ENCODE measurements at regions of chr17 and their contacts with region 1.

Region 1: DNA sequence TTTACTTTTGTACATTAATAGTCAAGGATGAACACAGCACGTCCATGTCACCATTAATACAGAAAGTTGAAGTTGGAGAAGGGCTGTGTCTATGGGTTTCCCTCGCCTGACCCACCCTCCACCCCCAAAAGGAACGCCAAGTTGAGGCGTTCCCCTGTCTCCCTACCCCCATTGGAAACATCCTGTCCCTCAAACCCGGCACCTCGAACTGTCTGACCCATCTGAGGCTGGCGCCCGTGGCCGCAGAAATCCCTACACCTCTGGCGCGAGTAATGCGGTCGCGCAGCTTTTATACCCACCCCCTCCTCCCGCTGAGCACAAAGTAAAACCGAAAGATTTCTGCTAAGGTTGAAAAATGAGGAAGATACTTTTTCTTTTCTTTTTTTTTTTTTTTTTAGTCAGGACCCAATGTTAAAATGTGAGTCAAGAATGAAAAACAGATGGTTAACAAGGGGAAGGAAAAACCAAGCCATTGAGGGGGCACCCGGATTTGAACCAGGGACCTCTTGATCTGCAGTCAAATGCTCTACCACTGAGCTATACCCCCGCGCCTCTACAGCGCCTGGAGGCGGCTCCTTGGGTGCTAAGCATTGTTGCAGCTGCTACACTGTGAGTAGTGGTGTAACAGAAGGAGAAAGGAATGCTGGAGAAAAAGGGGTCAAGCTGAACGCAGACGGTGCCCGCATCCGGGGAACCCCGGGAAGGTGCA is 887 bp upstream of the LASP1 start:
- DNase-seq: peak; percentile 92 to 95
- H3K4me3 ChIP-seq: peak overlapping the region; percentile 79
- H3K4me3 Mint-ChIP-seq: peak overlapping the region; percentile 86
- H3K27ac Mint-ChIP-seq: peak overlapping the region; percentile 92
- H3K4me1 ChIP-seq: peaks cover 28% of the 10 kb centered on the region
- H3K4me1 Mint-ChIP-seq: peaks cover 11% of the 10 kb centered on the region
- H3K27me3 ChIP-seq: no peaks in the 10 kb centered on the region
- H3K27me3 Mint-ChIP-seq: no peaks in the 10 kb centered on the region
- CTCF ChIP-seq: peak in 1 of 2 experiments; percentile 20

Region 2: GRCh38 chr17:38711792-38712571 is 157.0 kb before region 1 on chr17:
- CTCF ChIA-PET with region 1: no interaction called
- POLR2A ChIA-PET with region 1: no interaction called
- intact Hi-C with region 1: no loop called
- DNase-seq: no peak
- H3K4me3 ChIP-seq: no peak overlapping the region
- H3K4me3 Mint-ChIP-seq: no peak overlapping the region
- H3K27ac Mint-ChIP-seq: no peak overlapping the region
- H3K4me1 ChIP-seq: no peaks in the 10 kb centered on the region; the same call in 1 of the 2 replicates
- H3K4me1 Mint-ChIP-seq: peaks cover 27% of the 10 kb centered on the region
- H3K27me3 ChIP-seq: no peaks in the 10 kb centered on the region
- H3K27me3 Mint-ChIP-seq: no peaks in the 10 kb centered on the region
- CTCF ChIP-seq: no peak

Region 3: GRCh38 chr17:38844261-38844757 is 24.7 kb before region 1 on chr17:
- CTCF ChIA-PET with region 1: no interaction called
- POLR2A ChIA-PET with region 1: interaction called, 11 read pairs
- intact Hi-C with region 1: no loop called
- DNase-seq: no peak
- H3K4me3 ChIP-seq: no peak overlapping the region
- H3K4me3 Mint-ChIP-seq: no peak overlapping the region
- H3K27ac Mint-ChIP-seq: peak overlapping the region; percentile 45
- H3K4me1 ChIP-seq: no peaks in the 10 kb centered on the region
- H3K4me1 Mint-ChIP-seq: no peaks in the 10 kb centered on the region
- H3K27me3 ChIP-seq: no peaks in the 10 kb centered on the region
- H3K27me3 Mint-ChIP-seq: no peaks in the 10 kb centered on the region
- CTCF ChIP-seq: no peak

Region 4: GRCh38 chr17:38922538-38923297 is 53.7 kb after region 1 on chr17:
- CTCF ChIA-PET with region 1: interaction called, 5 read pairs
- POLR2A ChIA-PET with region 1: no interaction called
- intact Hi-C with region 1: loop called (anchors 5 kb)
- DNase-seq: no peak
- H3K4me3 ChIP-seq: no peak overlapping the region
- H3K4me3 Mint-ChIP-seq: no peak overlapping the region
- H3K27ac Mint-ChIP-seq: no peak overlapping the region
- H3K4me1 ChIP-seq: no peaks in the 10 kb centered on the region
- H3K4me1 Mint-ChIP-seq: no peaks in the 10 kb centered on the region
- H3K27me3 ChIP-seq: no peaks in the 10 kb centered on the region
- H3K27me3 Mint-ChIP-seq: no peaks in the 10 kb centered on the region
- CTCF ChIP-seq: no peak

Region 5: DNA sequence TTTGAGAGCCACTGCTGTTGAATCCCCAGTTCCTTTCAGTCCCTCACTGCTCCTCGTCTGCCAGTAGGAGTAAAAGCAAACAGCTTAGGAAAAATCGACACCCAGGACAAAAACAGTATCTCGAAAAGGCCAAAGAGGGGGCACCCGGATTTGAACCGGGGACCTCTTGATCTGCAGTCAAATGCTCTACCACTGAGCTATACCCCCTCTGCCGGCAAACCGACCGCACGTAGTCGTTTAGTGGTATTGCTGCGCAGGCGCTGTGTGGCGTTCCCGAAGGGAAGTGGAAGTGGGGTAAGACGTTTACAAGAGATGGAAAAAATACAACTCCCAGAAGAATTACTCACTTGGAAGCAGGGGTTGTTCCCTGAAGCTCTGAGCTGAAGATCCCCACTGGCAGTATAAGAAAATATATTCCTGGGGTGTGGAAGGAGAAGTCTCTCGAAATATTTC is 284.7 kb after region 1 on chr17:
- CTCF ChIA-PET with region 1: interaction called, 15 read pairs
- POLR2A ChIA-PET with region 1: interaction called, 10 read pairs
- intact Hi-C with region 1: loop called (anchors 1 kb)
- DNase-seq: peak; percentile 90 to 94
- H3K4me3 ChIP-seq: peak overlapping the region; percentile 83
- H3K4me3 Mint-ChIP-seq: peak overlapping the region; percentile 94
- H3K27ac Mint-ChIP-seq: peak overlapping the region; percentile 96
- H3K4me1 ChIP-seq: peaks cover 4% of the 10 kb centered on the region
- H3K4me1 Mint-ChIP-seq: peaks cover 36% of the 10 kb centered on the region
- H3K27me3 ChIP-seq: peaks cover 5% of the 10 kb centered on the region; the same call in 1 of the 2 replicates
- H3K27me3 Mint-ChIP-seq: peaks cover 10% of the 10 kb centered on the region
- CTCF ChIP-seq: peak; percentile 8 to 10